ENCODE measurements at regions of chr16 and their contacts with region 1.

Region 1: DNA sequence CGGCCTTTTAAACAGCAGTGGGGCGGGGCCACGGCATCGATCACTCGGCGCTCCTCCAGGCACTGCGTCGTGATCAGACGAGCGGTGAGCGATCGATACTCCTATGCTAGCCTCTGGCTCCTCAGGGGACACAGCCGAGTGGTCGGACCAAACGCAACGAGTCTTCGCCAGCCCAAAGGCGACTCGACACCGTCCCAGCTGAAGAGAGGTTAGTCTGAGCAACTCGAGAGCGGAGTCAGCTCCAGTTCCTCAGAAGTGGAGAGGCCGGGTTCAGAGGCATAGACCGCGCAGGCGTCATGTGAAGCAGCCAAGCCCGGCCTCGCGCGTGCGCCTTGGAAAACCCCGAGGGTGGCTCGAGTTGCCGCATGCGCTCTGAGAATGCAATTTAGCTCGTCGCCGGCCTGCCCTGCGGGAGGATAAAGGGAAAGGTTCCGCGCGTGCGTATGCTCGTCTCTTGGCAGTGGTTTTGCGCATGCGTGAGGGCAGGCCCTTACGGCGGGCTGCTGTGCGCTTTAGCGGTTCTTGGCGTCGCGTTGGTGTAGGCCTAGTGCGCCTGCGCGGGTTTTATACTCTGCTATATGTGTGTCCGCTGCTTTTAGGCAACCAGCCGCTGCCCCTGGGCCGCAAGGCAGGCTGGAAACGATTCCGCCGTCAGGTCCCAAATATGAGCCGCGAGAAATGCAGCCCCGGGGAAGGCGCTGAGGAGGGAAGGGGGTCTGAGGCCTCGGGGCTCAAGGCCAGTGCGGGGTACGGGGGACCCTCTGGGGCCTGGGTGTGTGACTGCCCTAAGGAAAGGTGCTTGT is at the start of gene KDM8:
- DNase-seq: peak; percentile 100
- H3K4me3 Mint-ChIP-seq: peak within 1 kb of the TSS; percentile 93
- H3K27ac Mint-ChIP-seq: peak within 1 kb of the TSS; percentile 100
- H3K4me1 Mint-ChIP-seq: peaks cover 52% of the 10 kb centered on the region
- H3K27me3 Mint-ChIP-seq: peaks cover 2% of the 10 kb centered on the region
- total RNA-seq, gene KDM8: 11.0 and 13.6 TPM in 2 replicates

Region 2: DNA sequence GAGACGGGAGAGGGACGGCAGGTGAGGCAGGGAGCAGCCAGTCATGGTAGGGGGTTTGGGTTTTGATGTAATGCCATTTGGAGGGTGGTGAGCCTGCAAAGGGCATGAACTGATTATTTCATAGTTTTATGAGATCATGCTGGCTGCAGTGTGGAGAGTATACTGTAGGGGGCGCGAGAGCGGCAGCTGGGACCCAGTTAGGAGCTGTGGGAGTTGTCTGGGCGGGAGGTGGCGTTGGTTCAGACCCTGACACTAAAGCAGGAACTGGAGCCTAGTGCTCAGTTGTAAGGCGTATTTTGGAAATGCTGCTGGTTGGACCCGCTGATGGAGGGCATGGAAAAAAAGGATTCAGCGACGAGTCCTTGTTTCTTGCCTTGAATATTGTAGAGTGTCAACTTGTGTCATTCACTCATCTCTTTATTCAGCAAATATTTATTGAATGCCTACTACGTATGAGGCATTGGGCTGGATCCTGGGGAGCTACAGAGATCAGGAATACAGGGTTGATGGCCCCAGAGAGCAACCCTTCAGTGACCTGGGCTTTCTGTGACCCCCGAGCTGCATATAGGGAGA is 24.0 kb before region 1 on chr16:
- intact Hi-C with region 1: loop called (anchors 1 kb)
- DNase-seq: peak; percentile 96
- H3K4me3 Mint-ChIP-seq: peak overlapping the region; percentile 3
- H3K27ac Mint-ChIP-seq: peak overlapping the region; percentile 73
- H3K4me1 Mint-ChIP-seq: peaks cover 38% of the 10 kb centered on the region
- H3K27me3 Mint-ChIP-seq: peaks cover 3% of the 10 kb centered on the region

Region 3: GRCh38 chr16:27273670-27274423 is 70.2 kb after region 1 on chr16:
- intact Hi-C with region 1: no loop called
- DNase-seq: peak; percentile 83
- H3K4me3 Mint-ChIP-seq: peak overlapping the region; percentile 68
- H3K27ac Mint-ChIP-seq: peak overlapping the region; percentile 94
- H3K4me1 Mint-ChIP-seq: peaks cover 59% of the 10 kb centered on the region
- H3K27me3 Mint-ChIP-seq: no peaks in the 10 kb centered on the region

Region 4: DNA sequence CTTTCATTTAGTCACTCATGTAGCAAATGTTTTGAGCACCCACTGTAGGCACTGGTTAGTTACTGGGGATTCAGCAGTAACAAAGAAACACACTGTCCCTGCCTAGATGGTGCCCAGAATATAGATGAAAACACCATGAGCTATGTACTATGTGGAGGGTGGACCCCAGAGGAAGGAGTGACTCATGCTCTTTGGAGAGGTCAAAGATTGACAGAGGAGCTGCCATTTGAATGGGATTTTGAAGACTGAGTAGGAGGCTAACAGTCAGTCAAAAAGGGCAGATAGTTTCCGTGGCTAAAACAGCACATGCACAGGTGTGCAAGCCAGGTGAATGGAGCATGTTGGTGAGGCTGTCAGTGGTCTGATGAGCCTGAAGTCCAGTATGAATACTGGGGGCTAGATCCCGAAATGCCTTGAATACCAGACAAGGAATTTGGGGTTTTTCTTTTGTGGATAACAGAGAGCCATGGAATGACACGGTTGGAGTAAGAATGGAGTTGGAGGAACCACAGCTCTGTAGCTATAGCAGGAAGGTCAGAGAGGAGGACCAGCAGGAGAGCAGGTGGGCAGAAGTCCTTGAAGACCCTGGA is 204.5 kb after region 1 on chr16:
- intact Hi-C with region 1: loop called (anchors 1 kb)
- DNase-seq: peak; percentile 79
- H3K4me3 Mint-ChIP-seq: peak overlapping the region; percentile 100
- H3K27ac Mint-ChIP-seq: peak overlapping the region; percentile 98
- H3K4me1 Mint-ChIP-seq: peaks cover 62% of the 10 kb centered on the region
- H3K27me3 Mint-ChIP-seq: no peaks in the 10 kb centered on the region

Region 5: DNA sequence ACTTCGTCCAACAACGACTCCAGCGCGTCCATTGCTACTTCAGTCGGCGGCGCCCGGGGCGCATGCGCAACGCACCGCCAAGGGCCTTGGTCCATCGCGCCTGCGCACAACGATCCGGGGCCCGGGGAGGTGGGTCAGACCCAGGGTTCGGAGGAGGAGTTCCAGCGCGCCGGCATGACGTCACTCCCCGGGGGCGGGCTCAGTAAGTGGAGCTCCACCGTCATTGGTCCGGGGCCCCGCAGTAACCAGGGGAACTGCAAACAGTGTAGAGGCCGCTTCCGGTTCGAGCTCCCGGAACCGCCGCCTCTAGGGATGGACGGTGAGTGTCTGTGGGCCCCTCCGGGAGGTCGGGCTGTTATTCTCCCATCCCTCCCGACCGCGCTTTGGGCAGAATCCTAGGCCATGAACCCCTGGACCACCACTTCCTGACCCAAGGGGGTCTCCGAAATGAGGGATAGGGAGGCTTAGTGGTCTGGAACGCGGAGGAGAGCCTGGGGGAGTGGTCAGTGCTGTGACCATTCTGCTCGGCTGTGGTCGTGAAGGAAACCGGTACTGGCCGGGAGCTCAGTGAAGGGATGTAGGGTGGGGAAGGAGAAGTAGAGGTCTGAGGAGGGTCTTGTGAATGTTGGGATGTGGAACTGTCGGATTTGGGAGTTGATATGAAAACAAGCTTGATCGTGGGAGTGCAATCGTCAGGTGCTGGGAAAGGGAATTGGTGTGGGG is 346.4 kb after region 1 on chr16 and contains the starts of genes GTF3C1 and KATNIP:
- intact Hi-C with region 1: loop called (anchors 10 kb)
- DNase-seq: peak; percentile 100
- H3K4me3 Mint-ChIP-seq: peak within 1 kb of the TSS; percentile 92
- H3K27ac Mint-ChIP-seq: peak within 1 kb of the TSS; percentile 89
- H3K4me1 Mint-ChIP-seq: peaks cover 35% of the 10 kb centered on the region
- H3K27me3 Mint-ChIP-seq: peaks cover 1% of the 10 kb centered on the region
- total RNA-seq, gene GTF3C1: 54.3 and 56.5 TPM in 2 replicates
- total RNA-seq, gene KATNIP: 17.5 and 18.0 TPM in 2 replicates

Region 6: GRCh38 chr16:28193530-28194423 is 990.1 kb after region 1 on chr16:
- intact Hi-C with region 1: no loop called
- DNase-seq: peak; percentile 78
- H3K4me3 Mint-ChIP-seq: peak overlapping the region; percentile 87
- H3K27ac Mint-ChIP-seq: peak overlapping the region; percentile 96
- H3K4me1 Mint-ChIP-seq: peaks cover 75% of the 10 kb centered on the region
- H3K27me3 Mint-ChIP-seq: no peaks in the 10 kb centered on the region